ENCODE measurements at regions of chr2 and their contacts with region 1.

Region 1: GRCh38 chr2:158745044-158745865 is 49.9 kb upstream of the DAPL1 start:
- DNase-seq: peak; percentile 46
- H3K4me3 ChIP-seq: no peak overlapping the region
- H3K27ac ChIP-seq: no peak overlapping the region
- H3K4me1 ChIP-seq: no peaks in the 10 kb centered on the region
- H3K27me3 ChIP-seq: no peaks in the 10 kb centered on the region
- CTCF ChIP-seq: peak; percentile 47

Region 2: DNA sequence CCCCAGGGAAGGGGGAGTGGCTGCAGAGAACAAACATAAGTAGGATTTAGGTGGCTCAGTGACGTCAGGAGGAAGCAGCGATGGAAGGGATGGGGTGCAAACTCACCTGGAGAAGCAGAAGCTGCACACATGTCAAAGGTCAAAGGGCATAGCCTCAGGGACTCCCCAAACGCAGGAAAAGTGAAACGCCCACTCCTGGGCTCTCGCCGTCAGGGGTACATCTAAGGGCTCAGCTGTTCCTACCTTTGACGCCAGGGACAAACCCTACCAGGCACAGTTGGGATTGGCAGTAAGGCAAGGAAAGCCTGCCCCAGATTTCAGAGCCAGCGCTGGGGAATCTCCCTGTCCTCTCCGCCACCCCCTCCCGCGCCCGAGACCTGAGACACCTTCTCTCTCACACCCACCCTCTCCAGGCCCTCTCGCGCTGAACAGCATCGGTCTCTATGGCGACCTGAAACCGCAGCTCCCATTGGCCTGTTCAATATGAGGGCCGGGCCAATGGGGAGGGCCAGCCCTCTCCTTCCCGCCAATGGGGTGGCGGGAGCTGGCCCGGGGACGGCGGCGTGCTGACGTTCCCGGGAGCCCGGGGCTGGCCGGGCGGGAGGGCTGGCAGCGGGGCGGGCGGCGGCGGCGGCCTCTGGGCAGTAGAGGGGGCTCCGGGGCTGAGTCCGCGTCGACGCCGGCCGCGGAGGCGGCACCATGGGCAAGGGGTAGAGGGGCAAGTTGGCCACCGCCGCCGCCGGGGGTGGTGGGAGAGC is 288.8 kb before region 1 on chr2 and contains the starts of genes CCDC148 and PKP4:
- intact Hi-C with region 1: loop called (anchors 10 kb)
- DNase-seq: peak; percentile 90
- H3K4me3 ChIP-seq: peak within 1 kb of the TSS; percentile 89
- H3K27ac ChIP-seq: peak within 1 kb of the TSS; percentile 95
- H3K4me1 ChIP-seq: no peaks in the 10 kb centered on the region
- H3K27me3 ChIP-seq: no peaks in the 10 kb centered on the region
- CTCF ChIP-seq: no peak
- total RNA-seq, gene CCDC148: 0.13 to 0.49 TPM
- total RNA-seq, gene PKP4: 43.7 to 67.3 TPM

Region 3: DNA sequence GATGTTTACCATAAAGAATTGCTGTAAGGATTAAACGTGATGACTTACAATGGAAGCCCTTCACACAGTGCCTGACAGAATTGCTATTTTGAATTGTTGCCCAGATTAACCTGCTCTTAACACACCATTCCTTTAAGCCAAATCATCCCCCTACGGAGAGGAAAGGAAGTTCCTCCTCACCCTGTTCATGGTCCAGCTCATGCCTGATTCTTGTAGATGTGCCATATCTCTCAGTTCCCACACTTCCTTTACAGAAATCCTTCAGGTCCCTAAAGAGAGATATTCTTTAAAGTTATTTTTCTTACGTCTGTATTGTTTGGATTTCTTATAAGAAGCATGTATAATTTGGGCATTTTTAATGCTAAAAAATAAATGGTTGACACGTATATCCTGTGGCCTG is 77.7 kb before region 1 on chr2:
- intact Hi-C with region 1: no loop called
- DNase-seq: no peak
- H3K4me3 ChIP-seq: no peak overlapping the region
- H3K27ac ChIP-seq: no peak overlapping the region
- H3K4me1 ChIP-seq: no peaks in the 10 kb centered on the region
- H3K27me3 ChIP-seq: no peaks in the 10 kb centered on the region
- CTCF ChIP-seq: no peak